ENCODE measurements at regions of chr7 and their contacts with region 1.

Region 1: GRCh38 chr7:42237162-42237821 is at the start of gene GLI3:
- DNase-seq: peak; percentile 90
- H3K4me3 ChIP-seq: peak within 1 kb of the TSS; percentile 85 to 95 (median 90)
- H3K27ac ChIP-seq: peak within 1 kb of the TSS; percentile 78
- H3K4me1 ChIP-seq: peaks cover 23% of the 10 kb centered on the region
- H3K27me3 ChIP-seq: no peaks in the 10 kb centered on the region
- CTCF ChIP-seq: peak in 1 of 2 donors; percentile 52
- POLR2A ChIP-seq: peak; percentile 75
- total RNA-seq, gene GLI3: 24.9 and 30.3 TPM in 2 replicates

Region 2: GRCh38 chr7:41996381-41997035 is 240.8 kb before region 1 on chr7:
- CTCF ChIA-PET with region 1: no interaction called
- POLR2A ChIA-PET with region 1: no interaction called
- dilution Hi-C with region 1: loop called (anchors 25 kb)
- intact Hi-C with region 1: loop called (anchors 2 kb)
- DNase-seq: peak; percentile 60
- H3K4me3 ChIP-seq: no peak overlapping the region
- H3K27ac ChIP-seq: peak overlapping the region; percentile 26
- H3K4me1 ChIP-seq: peaks cover 44% of the 10 kb centered on the region
- H3K27me3 ChIP-seq: no peaks in the 10 kb centered on the region
- CTCF ChIP-seq: no peak
- POLR2A ChIP-seq: no peak

Region 3: GRCh38 chr7:42107484-42108245 is 129.6 kb before region 1 on chr7:
- CTCF ChIA-PET with region 1: no interaction called
- POLR2A ChIA-PET with region 1: no interaction called
- dilution Hi-C with region 1: no loop called
- intact Hi-C with region 1: loop called (anchors 5 kb)
- DNase-seq: no peak
- H3K4me3 ChIP-seq: no peak overlapping the region
- H3K27ac ChIP-seq: no peak overlapping the region
- H3K4me1 ChIP-seq: peaks cover 8% of the 10 kb centered on the region
- H3K27me3 ChIP-seq: no peaks in the 10 kb centered on the region
- CTCF ChIP-seq: no peak
- POLR2A ChIP-seq: no peak

Region 4: DNA sequence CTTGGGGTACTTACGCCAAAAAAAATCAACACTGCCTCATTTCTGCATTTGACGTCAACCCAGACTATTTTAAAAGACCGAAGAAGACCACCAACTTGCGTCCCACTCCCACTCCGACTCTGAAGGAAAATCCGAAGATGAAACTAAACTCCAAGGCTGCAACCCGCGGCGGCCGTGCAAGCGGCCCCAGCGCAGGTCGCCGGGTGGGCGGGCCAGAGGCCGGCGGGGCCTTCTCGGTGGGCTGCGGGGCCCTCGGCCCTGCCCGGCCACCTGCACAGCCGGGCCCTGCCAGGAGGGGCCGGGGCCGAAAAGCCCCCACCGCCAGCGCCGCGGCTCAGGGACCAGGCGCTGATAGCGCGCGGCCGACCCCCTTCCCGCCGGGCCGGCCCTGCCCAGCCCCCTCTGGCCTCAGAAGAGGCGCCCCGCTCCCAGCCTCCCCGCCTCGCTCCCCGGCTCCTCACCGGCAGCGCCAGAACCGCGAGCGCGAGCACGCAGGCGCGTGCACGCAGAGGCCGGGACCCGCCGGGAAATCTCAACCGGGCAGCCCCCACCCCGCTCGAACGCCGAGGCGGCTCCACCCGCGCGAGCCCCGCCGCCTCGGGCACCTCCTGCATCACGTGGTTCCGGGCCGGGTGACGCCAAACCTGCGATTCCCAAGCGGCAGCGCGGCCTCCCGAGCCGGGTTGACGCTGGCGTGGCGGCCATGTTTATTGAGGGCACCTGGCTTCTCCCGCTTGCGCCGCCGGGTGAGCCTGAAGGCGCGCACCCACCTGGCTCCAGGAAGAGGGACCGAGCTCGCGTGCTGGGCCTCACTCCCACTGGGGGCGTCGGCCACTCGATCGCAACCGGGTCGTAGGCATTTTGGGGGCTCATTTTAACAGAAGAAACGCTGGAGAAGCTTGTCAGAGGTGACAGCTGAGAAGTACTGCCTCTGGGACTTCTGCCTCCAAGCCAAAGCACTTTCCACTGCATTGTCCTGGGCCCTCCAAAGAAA is 674.5 kb after region 1 on chr7 and contains the start of gene C7orf25:
- CTCF ChIA-PET with region 1: no interaction called
- POLR2A ChIA-PET with region 1: no interaction called
- dilution Hi-C with region 1: no loop called
- intact Hi-C with region 1: loop called (anchors 2 kb)
- DNase-seq: peak; percentile 95
- H3K4me3 ChIP-seq: peak within 1 kb of the TSS; percentile 68 to 94 (median 92)
- H3K27ac ChIP-seq: peak within 1 kb of the TSS; percentile 33
- H3K4me1 ChIP-seq: peaks cover 33% of the 10 kb centered on the region
- H3K27me3 ChIP-seq: no peaks in the 10 kb centered on the region
- CTCF ChIP-seq: no peak
- POLR2A ChIP-seq: peak; percentile 60
- total RNA-seq, gene C7orf25: 4.2 and 4.5 TPM in 2 replicates

Region 5: DNA sequence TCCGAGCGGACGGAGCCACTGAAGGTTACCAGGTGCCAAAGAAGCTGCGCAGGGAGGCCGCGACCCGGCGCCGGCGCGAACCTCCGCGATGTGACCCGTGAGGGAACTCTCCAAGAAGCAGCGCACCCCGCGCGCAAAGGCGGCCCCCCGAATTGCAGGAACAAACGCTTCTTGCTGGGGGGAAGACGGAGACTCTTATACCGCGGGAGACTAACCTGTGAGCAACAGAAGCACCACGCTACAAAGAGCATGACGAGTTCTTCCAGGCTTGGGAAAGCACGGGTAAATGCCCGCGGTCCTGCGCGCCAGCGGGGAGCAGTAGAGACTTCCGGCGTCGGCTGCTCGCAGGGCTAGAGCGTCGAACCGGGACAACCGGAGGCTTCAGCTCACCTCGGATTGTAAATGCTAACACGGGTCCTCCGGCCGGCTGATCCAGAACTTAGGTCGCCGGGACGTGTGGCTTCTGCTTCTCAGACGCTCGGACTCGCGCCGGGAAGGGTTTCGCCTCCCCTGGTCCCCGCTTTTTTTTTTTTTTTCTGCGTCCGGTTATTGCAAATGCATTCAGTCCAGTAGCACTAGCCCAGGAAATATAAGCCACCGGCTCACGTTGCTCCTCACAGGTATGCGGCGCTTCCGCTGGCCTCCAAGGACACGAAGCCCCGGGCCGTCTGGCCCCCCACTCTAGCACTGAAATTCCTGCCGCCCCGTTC is 1492.1 kb after region 1 on chr7 and contains the start of gene COA1:
- CTCF ChIA-PET with region 1: no interaction called
- POLR2A ChIA-PET with region 1: no interaction called
- dilution Hi-C with region 1: no loop called
- intact Hi-C with region 1: loop called (anchors 10 kb)
- DNase-seq: peak; percentile 93
- H3K4me3 ChIP-seq: peak within 1 kb of the TSS; percentile 13 to 66 (median 58)
- H3K27ac ChIP-seq: peak within 1 kb of the TSS; percentile 48
- H3K4me1 ChIP-seq: peaks cover 14% of the 10 kb centered on the region
- H3K27me3 ChIP-seq: peaks cover 0 to 3% of the 10 kb centered on the region in 2 experiments
- CTCF ChIP-seq: no peak
- POLR2A ChIP-seq: peak; percentile 86
- total RNA-seq, gene COA1: 55.1 and 58.0 TPM in 2 replicates

Measured in endothelial cell of umbilical vein (primary cell).